Transverse colon (tissue), 4 donors: ENCODE measurements at regions of chr1 and their contacts with region 1.

Region 1: DNA sequence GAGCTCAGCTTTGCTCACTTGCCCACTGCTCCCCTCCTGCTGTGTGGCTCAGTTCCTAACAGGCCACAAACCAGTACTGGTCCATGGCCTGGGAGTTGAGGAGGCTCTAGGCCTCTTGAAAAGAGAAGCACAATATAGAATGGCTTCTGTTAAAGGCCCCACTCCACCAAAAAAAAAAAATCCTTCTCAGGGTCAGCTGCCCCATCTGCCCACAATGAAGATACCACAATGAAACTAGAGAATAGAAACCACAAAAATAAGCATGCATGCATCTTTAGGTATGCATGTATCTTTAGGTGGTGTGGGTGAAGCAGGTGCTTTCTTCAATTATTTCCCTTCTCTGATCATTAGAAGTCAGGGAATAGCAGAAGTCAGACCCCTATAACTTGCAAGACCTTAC is 620.4 kb upstream of the BEND5 start:
- DNase-seq: no peak
- H3K4me3 ChIP-seq: no peak overlapping the region
- H3K27ac ChIP-seq: no peak overlapping the region
- H3K4me1 ChIP-seq: no peaks in the 10 kb centered on the region
- H3K27me3 ChIP-seq: no peaks in the 10 kb centered on the region
- CTCF ChIP-seq: no peak
- EP300 ChIP-seq: no peak
- POLR2A ChIP-seq: no peak

Region 2: GRCh38 chr1:49333906-49334305 is 63.2 kb before region 1 on chr1:
- in situ Hi-C with region 1: loop called in 1 of 4 experiments (anchors 10 kb)
- intact Hi-C with region 1: no loop called
- DNase-seq: no peak
- H3K4me3 ChIP-seq: no peak overlapping the region
- H3K27ac ChIP-seq: no peak overlapping the region
- H3K4me1 ChIP-seq: no peaks in the 10 kb centered on the region
- H3K27me3 ChIP-seq: no peaks in the 10 kb centered on the region
- CTCF ChIP-seq: no peak
- EP300 ChIP-seq: no peak
- POLR2A ChIP-seq: no peak